A549 (cell line): ENCODE measurements at regions of chr10 and their contacts with region 1.

Region 1: GRCh38 chr10:24197263-24197662 is 11.7 kb upstream of the KIAA1217 start:
- DNase-seq: no peak
- ATAC-seq: no peak
- H3K4me3 ChIP-seq: no peak overlapping the region
- H3K27ac ChIP-seq: no peak overlapping the region
- H3K4me1 ChIP-seq: no peaks in the 10 kb centered on the region
- CTCF ChIP-seq: no peak
- EP300 ChIP-seq: no peak
- POLR2A ChIP-seq: no peak
- RAD21 ChIP-seq: no peak

Region 2: GRCh38 chr10:24041034-24041433 is 156.2 kb before region 1 on chr10:
- CTCF ChIA-PET with region 1: no interaction called
- POLR2A ChIA-PET with region 1: no interaction called
- DNase-seq: no peak
- ATAC-seq: no peak
- H3K4me3 ChIP-seq: no peak overlapping the region
- H3K27ac ChIP-seq: no peak overlapping the region
- H3K4me1 ChIP-seq: no peaks in the 10 kb centered on the region
- CTCF ChIP-seq: no peak
- EP300 ChIP-seq: no peak
- POLR2A ChIP-seq: no peak
- RAD21 ChIP-seq: no peak

Region 3: GRCh38 chr10:24086296-24087086 is 110.8 kb before region 1 on chr10:
- CTCF ChIA-PET with region 1: no interaction called
- POLR2A ChIA-PET with region 1: no interaction called
- DNase-seq: no peak
- ATAC-seq: no peak
- H3K4me3 ChIP-seq: no peak overlapping the region
- H3K27ac ChIP-seq: no peak overlapping the region
- H3K4me1 ChIP-seq: no peaks in the 10 kb centered on the region
- CTCF ChIP-seq: no peak
- EP300 ChIP-seq: no peak
- POLR2A ChIP-seq: no peak
- RAD21 ChIP-seq: no peak

Region 4: GRCh38 chr10:24209946-24210491 is 12.8 kb after region 1 on chr10:
- CTCF ChIA-PET with region 1: interaction called, 11 read pairs
- POLR2A ChIA-PET with region 1: no interaction called
- DNase-seq: peak; percentile 14
- ATAC-seq: peak; percentile 43 to 64; a peak in 5 of 6 replicates
- H3K4me3 ChIP-seq: no peak overlapping the region; the same call in 2 of the 3 replicates
- H3K27ac ChIP-seq: no peak overlapping the region
- H3K4me1 ChIP-seq: peaks cover 20% of the 10 kb centered on the region; the same call in 2 of the 3 replicates
- CTCF ChIP-seq: no peak
- EP300 ChIP-seq: no peak
- POLR2A ChIP-seq: no peak
- RAD21 ChIP-seq: no peak

Region 5: GRCh38 chr10:24541239-24542048 is 344.2 kb after region 1 on chr10:
- CTCF ChIA-PET with region 1: no interaction called
- POLR2A ChIA-PET with region 1: no interaction called
- DNase-seq: peak in 1 of 2 experiments; percentile 48
- ATAC-seq: peak in 1 of 2 experiments; percentile 62; a peak in 3 of 6 replicates
- H3K4me3 ChIP-seq: no peak overlapping the region
- H3K27ac ChIP-seq: no peak overlapping the region
- H3K4me1 ChIP-seq: no peaks in the 10 kb centered on the region
- CTCF ChIP-seq: no peak
- EP300 ChIP-seq: no peak
- POLR2A ChIP-seq: no peak
- RAD21 ChIP-seq: no peak